ENCODE measurements at regions of chr6 and their contacts with region 1.

Region 1: DNA sequence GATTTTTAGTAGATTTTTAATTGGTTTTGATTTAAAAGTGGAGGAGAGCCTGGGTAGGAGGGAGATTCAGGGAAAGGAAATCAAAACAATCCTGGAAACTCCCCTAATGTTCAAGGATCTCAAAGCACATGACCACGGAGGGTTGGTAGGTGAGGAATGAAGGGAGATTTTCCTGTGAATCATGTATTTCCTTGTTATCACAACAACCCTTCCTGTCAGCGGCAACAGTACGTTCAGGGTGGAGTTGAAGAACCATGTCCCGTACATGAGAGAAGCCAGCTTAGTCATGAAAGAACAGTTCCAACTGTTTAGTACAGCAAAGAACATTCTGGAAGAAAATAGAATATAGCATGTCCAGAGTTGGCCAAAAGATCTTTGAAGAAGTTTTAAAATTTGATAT is 79.4 kb upstream of the SCAF8 start:
- DNase-seq: peak; percentile 44
- ATAC-seq: peak; percentile 63 to 94

Region 2: GRCh38 chr6:155436981-155437749 is 783.3 kb after region 1 on chr6:
- intact Hi-C with region 1: loop called in 1 of 2 experiments (anchors 10 kb)
- DNase-seq: no peak
- ATAC-seq: peak; percentile 78 to 84

Measured in left cardiac atrium (tissue), 4 donors.